MCF 10A (cell line): ENCODE measurements at regions of chr9 and their contacts with region 1.

Region 1: DNA sequence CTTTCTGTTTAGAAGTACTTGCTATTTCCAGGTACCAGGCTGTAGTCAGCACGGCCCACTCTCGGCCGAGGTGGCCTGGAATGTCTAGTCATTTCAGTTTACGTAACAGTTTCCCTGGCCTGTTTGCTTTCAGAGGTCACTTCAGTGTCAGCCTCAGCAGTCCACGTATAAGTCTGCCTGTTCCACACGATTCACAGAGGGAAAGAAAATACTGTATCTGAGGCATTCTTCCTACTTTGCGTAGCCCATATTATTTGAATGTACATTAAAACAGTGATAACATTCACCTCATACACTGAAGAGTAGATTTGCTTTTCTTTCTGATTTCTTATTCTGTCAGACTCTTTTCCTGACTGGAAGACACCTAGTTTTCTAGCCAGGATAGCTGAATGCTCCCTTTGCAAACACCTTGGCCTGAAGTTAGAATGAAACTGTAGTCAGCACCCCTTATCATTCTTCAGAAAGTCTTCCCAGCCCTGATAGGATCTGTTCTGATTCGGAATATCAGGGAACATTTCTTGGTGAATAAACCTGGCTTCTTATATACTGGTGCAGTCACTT is 140.9 kb downstream of the AOPEP start:
- DNase-seq: peak; percentile 82
- H3K4me3 Mint-ChIP-seq: peak overlapping the region; percentile 31
- H3K27ac Mint-ChIP-seq: peak overlapping the region; percentile 89
- H3K4me1 Mint-ChIP-seq: peaks cover 44% of the 10 kb centered on the region
- H3K27me3 Mint-ChIP-seq: no peaks in the 10 kb centered on the region
- CTCF ChIP-seq: no peak

Region 2: GRCh38 chr9:94799578-94800264 is 67.6 kb before region 1 on chr9:
- CTCF ChIA-PET with region 1: no interaction called
- POLR2A ChIA-PET with region 1: interaction called, 50 read pairs
- intact Hi-C with region 1: loop called (anchors 10 kb)
- DNase-seq: peak; percentile 58
- H3K4me3 Mint-ChIP-seq: peak overlapping the region; percentile 72
- H3K27ac Mint-ChIP-seq: peak overlapping the region; percentile 94
- H3K4me1 Mint-ChIP-seq: peaks cover 36% of the 10 kb centered on the region
- H3K27me3 Mint-ChIP-seq: no peaks in the 10 kb centered on the region
- CTCF ChIP-seq: no peak

Region 3: GRCh38 chr9:94827584-94828304 is 39.6 kb before region 1 on chr9:
- CTCF ChIA-PET with region 1: no interaction called
- POLR2A ChIA-PET with region 1: no interaction called
- intact Hi-C with region 1: no loop called
- DNase-seq: no peak
- H3K4me3 Mint-ChIP-seq: no peak overlapping the region
- H3K27ac Mint-ChIP-seq: peak overlapping the region; percentile 73
- H3K4me1 Mint-ChIP-seq: peaks cover 10% of the 10 kb centered on the region
- H3K27me3 Mint-ChIP-seq: no peaks in the 10 kb centered on the region
- CTCF ChIP-seq: no peak

Region 4: GRCh38 chr9:94881023-94881422 is 13.7 kb after region 1 on chr9:
- CTCF ChIA-PET with region 1: interaction called, 5 read pairs
- POLR2A ChIA-PET with region 1: interaction called, 11 read pairs
- intact Hi-C with region 1: no loop called
- DNase-seq: no peak
- H3K4me3 Mint-ChIP-seq: no peak overlapping the region
- H3K27ac Mint-ChIP-seq: no peak overlapping the region
- H3K4me1 Mint-ChIP-seq: peaks cover 15% of the 10 kb centered on the region
- H3K27me3 Mint-ChIP-seq: no peaks in the 10 kb centered on the region
- CTCF ChIP-seq: no peak

Region 5: DNA sequence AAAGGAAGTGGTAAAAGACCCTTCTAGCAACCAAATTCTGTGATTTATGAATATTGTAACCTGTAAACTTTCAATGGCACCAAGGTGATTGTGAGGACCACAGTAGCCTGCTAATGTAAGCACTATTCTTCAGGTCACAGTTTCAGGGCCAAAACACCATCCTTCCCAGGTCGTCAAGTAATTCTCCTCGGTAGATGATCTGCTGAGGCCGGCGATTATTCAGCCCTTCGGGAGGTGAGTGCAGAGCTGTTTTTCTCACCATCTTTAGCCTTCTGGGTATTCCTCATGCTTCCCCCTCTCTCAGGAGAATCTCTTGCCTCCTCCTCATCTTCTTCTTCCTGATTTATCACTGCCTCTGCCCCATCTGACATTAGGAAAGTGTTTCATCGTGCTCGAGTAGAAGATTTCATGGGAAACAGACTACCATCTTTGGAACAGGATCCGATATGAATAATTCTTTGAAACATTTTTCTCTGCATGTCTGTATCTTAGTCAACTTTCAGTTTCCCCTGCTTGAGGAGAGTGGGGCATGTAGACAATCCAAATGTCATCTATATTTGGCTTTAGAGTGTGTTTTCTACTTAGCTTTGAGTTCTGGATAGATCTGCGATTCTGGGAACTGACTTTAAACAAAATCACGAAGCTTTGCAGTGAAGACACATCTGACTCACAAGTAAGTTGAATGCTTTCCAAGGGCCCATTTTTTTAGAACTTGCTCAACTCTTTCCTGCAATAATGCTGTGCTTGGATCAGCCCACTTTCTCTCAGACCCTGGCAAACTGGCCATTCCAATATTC is 33.1 kb after region 1 on chr9:
- CTCF ChIA-PET with region 1: interaction called, 3 read pairs
- POLR2A ChIA-PET with region 1: interaction called, 24 read pairs
- intact Hi-C with region 1: no loop called
- DNase-seq: peak; percentile 94
- H3K4me3 Mint-ChIP-seq: peak overlapping the region; percentile 64
- H3K27ac Mint-ChIP-seq: peak overlapping the region; percentile 97
- H3K4me1 Mint-ChIP-seq: peaks cover 30% of the 10 kb centered on the region
- H3K27me3 Mint-ChIP-seq: no peaks in the 10 kb centered on the region
- CTCF ChIP-seq: no peak

Region 6: GRCh38 chr9:94912700-94913249 is 45.4 kb after region 1 on chr9:
- CTCF ChIA-PET with region 1: interaction called, 3 read pairs
- POLR2A ChIA-PET with region 1: interaction called, 45 read pairs
- intact Hi-C with region 1: no loop called
- DNase-seq: peak; percentile 82
- H3K4me3 Mint-ChIP-seq: peak overlapping the region; percentile 21
- H3K27ac Mint-ChIP-seq: peak overlapping the region; percentile 57
- H3K4me1 Mint-ChIP-seq: peaks cover 35% of the 10 kb centered on the region
- H3K27me3 Mint-ChIP-seq: no peaks in the 10 kb centered on the region
- CTCF ChIP-seq: no peak

Region 7: GRCh38 chr9:94922098-94922607 is 54.8 kb after region 1 on chr9:
- CTCF ChIA-PET with region 1: interaction called, 3 read pairs
- POLR2A ChIA-PET with region 1: interaction called, 30 read pairs
- intact Hi-C with region 1: loop called (anchors 5 kb)
- DNase-seq: peak; percentile 82
- H3K4me3 Mint-ChIP-seq: peak overlapping the region; percentile 43
- H3K27ac Mint-ChIP-seq: peak overlapping the region; percentile 85
- H3K4me1 Mint-ChIP-seq: peaks cover 75% of the 10 kb centered on the region
- H3K27me3 Mint-ChIP-seq: no peaks in the 10 kb centered on the region
- CTCF ChIP-seq: no peak

Region 8: DNA sequence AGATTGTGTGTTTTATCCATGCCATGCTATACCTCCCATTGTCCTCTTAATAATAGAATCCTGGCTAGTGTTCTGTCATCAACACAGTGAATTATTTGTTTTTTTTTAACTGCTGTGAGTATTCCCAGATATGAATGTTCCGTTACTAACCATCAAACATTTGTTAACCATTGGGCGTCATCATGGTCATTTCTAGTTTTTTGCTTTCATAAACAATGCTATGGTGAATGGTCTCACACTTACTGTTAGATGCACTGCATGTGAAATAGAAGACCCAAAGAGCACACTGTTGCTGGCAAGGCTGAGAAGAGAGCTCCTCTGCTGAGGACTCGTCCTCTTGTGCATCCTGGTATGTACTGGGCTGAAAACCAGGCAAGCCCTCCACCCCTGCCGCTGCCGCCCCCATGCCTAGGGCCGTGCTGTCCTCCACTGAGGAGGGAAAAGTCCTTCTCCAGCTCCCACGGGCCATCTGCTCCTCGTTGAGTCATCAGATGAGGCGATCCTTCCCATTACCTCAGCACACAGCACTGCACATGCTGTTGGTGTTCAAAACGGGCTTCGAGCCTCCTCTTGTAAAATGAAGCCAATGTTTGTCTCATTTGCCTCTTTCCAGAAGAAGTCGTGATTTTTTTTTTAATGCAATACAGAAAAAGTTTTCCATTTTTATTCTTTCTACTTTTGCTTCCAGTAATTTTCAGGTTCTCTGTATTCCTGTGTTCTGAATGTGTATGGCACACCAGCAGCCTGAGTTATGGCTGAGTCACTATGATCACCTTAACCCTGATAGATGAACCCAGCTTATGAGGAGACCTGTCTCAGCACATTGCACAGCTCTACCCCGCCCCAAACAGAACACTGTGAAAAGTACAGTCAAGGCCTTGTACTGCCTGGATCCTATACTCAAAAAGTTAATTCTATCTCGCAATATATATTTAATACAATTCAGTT is 78.1 kb after region 1 on chr9:
- CTCF ChIA-PET with region 1: no interaction called
- POLR2A ChIA-PET with region 1: interaction called, 18 read pairs
- intact Hi-C with region 1: no loop called
- DNase-seq: peak; percentile 82
- H3K4me3 Mint-ChIP-seq: peak overlapping the region; percentile 33
- H3K27ac Mint-ChIP-seq: peak overlapping the region; percentile 86
- H3K4me1 Mint-ChIP-seq: peaks cover 56% of the 10 kb centered on the region
- H3K27me3 Mint-ChIP-seq: no peaks in the 10 kb centered on the region
- CTCF ChIP-seq: no peak